CD8-positive, alpha-beta T cell (primary cell): ENCODE measurements at regions of chr11 and their contacts with region 1.

Region 1: GRCh38 chr11:43504316-43504950 is 145.7 kb downstream of the TTC17 start:
- DNase-seq: no peak
- ATAC-seq: no peak
- H3K4me3 ChIP-seq: no peak overlapping the region
- H3K4me3 Mint-ChIP-seq: no peak overlapping the region
- H3K27ac ChIP-seq: no peak overlapping the region
- H3K27ac Mint-ChIP-seq: no peak overlapping the region
- H3K4me1 ChIP-seq: no peaks in the 10 kb centered on the region
- H3K4me1 Mint-ChIP-seq: no peaks in the 10 kb centered on the region
- H3K27me3 ChIP-seq: peaks cover 0 to 2% of the 10 kb centered on the region in 2 experiments
- H3K27me3 Mint-ChIP-seq: peaks cover 4% of the 10 kb centered on the region
- CTCF ChIP-seq: no peak

Region 2: GRCh38 chr11:43852057-43852636 is 347.7 kb after region 1 on chr11:
- CTCF ChIA-PET with region 1: interaction called, 3 read pairs
- POLR2A ChIA-PET with region 1: no interaction called
- intact Hi-C with region 1: loop called in 1 of 2 experiments (anchors 1 kb)
- DNase-seq: peak; percentile 22 to 69 (median 49)
- ATAC-seq: peak; percentile 71
- H3K4me3 ChIP-seq: no peak overlapping the region
- H3K4me3 Mint-ChIP-seq: no peak overlapping the region
- H3K27ac ChIP-seq: no peak overlapping the region
- H3K27ac Mint-ChIP-seq: no peak overlapping the region
- H3K4me1 ChIP-seq: no peaks in the 10 kb centered on the region
- H3K4me1 Mint-ChIP-seq: peaks cover 5% of the 10 kb centered on the region
- H3K27me3 ChIP-seq: no peaks in the 10 kb centered on the region
- H3K27me3 Mint-ChIP-seq: no peaks in the 10 kb centered on the region
- CTCF ChIP-seq: peak; percentile 68